Prostate gland (tissue), 2 donors: ENCODE measurements at regions of chr15 and their contacts with region 1.

Region 1: GRCh38 chr15:65054333-65055200 is 9.4 kb downstream of the SLC51B start:
- DNase-seq: peak; percentile 72
- H3K4me3 ChIP-seq: no peak overlapping the region
- H3K27ac ChIP-seq: peak overlapping the region in 1 of 2 donors; percentile 16
- H3K4me1 ChIP-seq: no peaks in the 10 kb centered on the region
- H3K27me3 ChIP-seq: no peaks in the 10 kb centered on the region
- CTCF ChIP-seq: peak; percentile 66 to 94 (median 90)
- POLR2A ChIP-seq: no peak

Region 2: GRCh38 chr15:65083262-65083701 is 28.7 kb after region 1 on chr15:
- intact Hi-C with region 1: loop called (anchors 2 kb)
- DNase-seq: no peak
- H3K4me3 ChIP-seq: no peak overlapping the region
- H3K27ac ChIP-seq: peak overlapping the region in 1 of 2 donors; percentile 21
- H3K4me1 ChIP-seq: no peaks in the 10 kb centered on the region
- H3K27me3 ChIP-seq: no peaks in the 10 kb centered on the region
- CTCF ChIP-seq: peak in 3 of 4 experiments; percentile 14 to 45 (median 32)
- POLR2A ChIP-seq: no peak